H1 (cell line): ENCODE measurements at regions of chr12 and their contacts with region 1.

Region 1: DNA sequence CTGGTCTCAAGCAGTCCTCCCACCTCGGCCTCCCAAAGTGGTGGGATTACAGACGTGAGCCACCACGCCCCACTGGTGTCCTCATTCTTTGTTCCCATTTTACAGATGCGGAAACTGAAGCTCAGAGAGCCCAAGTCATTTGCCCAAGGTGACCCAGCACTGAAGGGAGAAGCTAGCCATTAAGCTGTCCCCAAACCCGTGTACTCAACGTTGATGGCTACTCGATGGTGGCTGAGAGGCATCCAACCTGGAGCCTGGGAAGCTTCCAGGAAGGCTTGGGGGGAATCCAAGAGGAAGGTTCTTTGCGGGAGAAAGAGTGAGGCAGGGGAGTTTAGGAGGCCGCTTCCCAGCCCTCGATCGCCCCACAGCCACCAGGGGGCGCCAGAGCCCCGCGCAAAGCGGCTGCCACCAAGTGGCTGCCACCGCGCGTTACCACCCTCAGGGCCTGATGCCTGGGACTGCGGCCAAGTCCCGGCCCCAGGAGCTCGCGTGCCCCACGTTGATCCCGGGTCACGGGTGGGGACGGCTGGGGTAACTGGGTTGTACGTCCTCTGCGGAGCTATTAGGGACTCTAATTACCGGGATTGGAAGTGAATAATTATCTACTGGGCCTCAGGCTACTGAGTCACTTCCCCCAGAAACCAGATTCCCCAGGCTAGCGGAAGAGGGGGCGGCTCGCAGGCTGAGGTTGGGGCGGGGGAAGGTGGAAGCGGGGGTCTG is 8.8 kb upstream of the SH2B3 start:
- DNase-seq: peak; percentile 60 to 98
- H3K4me3 ChIP-seq: no peak overlapping the region; a peak in 1 of 8 replicates
- H3K27ac ChIP-seq: no peak overlapping the region
- H3K4me1 ChIP-seq: no peaks in the 10 kb centered on the region
- H3K27me3 ChIP-seq: no peaks in the 10 kb centered on the region
- CTCF ChIP-seq: peak; percentile 92 to 100 (median 96)
- EP300 ChIP-seq: no peak
- POLR2A ChIP-seq: no peak
- RAD21 ChIP-seq: peak; percentile 95 to 97

Region 2: GRCh38 chr12:111339321-111339938 is 57.5 kb before region 1 on chr12:
- CTCF ChIA-PET with region 1: interaction called, 12 read pairs
- POLR2A ChIA-PET with region 1: no interaction called
- DNase-seq: no peak
- H3K4me3 ChIP-seq: no peak overlapping the region
- H3K27ac ChIP-seq: no peak overlapping the region
- H3K4me1 ChIP-seq: peaks cover 0 to 6% (median 0%) of the 10 kb centered on the region in 4 experiments; a peak in 2 of 7 replicates
- H3K27me3 ChIP-seq: no peaks in the 10 kb centered on the region
- CTCF ChIP-seq: no peak
- EP300 ChIP-seq: no peak
- POLR2A ChIP-seq: no peak
- RAD21 ChIP-seq: no peak

Region 3: DNA sequence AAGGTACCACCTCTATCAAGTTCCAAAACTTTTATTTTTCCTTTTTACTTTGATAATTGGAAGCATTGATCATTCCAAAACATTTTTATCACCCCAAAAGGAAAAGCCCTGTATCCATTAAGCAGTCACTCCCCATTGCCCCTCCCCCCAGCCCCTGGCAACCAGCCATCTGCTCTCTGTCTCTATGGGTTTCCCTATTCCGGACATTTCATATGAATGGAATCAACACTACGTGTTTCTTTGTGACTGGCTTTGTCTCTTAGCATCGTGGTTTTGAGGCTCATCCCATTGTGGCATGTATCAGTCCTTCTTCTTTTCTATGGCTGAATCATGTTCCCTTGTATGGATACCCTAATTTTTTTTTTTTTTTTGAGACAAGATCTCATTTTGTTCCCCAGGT is 10.0 kb before region 1 on chr12:
- CTCF ChIA-PET with region 1: interaction called, 50 read pairs
- POLR2A ChIA-PET with region 1: interaction called, 4 read pairs
- DNase-seq: no peak
- H3K4me3 ChIP-seq: no peak overlapping the region
- H3K27ac ChIP-seq: no peak overlapping the region
- H3K4me1 ChIP-seq: no peaks in the 10 kb centered on the region
- H3K27me3 ChIP-seq: no peaks in the 10 kb centered on the region; a peak in 1 of 7 replicates
- CTCF ChIP-seq: no peak
- EP300 ChIP-seq: no peak
- POLR2A ChIP-seq: no peak
- RAD21 ChIP-seq: no peak

Region 4: GRCh38 chr12:111419784-111420183 is 22.9 kb after region 1 on chr12:
- CTCF ChIA-PET with region 1: interaction called, 50 read pairs
- POLR2A ChIA-PET with region 1: interaction called, 3 read pairs
- DNase-seq: no peak
- H3K4me3 ChIP-seq: no peak overlapping the region
- H3K27ac ChIP-seq: no peak overlapping the region
- H3K4me1 ChIP-seq: peaks cover 2 to 17% (median 8%) of the 10 kb centered on the region in 4 experiments; a peak in 6 of 7 replicates
- H3K27me3 ChIP-seq: no peaks in the 10 kb centered on the region
- CTCF ChIP-seq: no peak
- EP300 ChIP-seq: no peak
- POLR2A ChIP-seq: no peak
- RAD21 ChIP-seq: no peak

Region 5: DNA sequence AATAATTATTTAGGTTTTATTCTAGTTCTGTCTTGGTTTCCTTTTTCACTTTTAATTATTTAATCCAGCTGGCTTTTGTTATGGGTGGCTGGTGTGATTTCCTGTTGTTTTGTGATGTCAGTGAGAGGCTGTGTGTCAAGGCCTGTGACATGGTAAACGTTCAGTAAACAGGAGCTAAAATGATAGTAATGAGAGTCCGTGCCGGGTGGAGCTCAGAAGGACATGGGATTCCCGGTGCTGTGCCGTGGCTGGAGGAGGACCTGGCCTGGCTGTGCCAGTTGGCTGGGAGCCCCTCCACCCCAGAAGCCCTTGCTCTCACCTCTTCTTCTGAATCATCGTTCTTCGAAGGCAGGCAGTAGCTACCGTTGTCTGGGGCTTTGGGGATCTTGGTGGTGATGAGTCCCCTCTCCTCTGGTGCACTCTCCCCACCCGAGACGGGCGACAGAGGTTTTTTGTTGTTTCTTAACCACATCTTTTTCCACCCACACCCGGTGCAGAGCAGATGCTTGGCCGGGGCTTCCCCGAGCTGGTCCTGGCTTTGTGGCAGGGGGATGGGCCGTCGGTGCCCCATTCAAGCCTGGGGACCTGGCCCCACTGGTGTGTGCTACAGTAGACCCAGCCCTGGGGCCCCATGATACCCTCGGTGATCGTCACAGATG is 37.9 kb after region 1 on chr12:
- CTCF ChIA-PET with region 1: interaction called, 838 read pairs
- POLR2A ChIA-PET with region 1: interaction called, 3 read pairs
- DNase-seq: no peak
- H3K4me3 ChIP-seq: no peak overlapping the region
- H3K27ac ChIP-seq: peak overlapping the region; percentile 32; the same call in 1 of the 2 replicates
- H3K4me1 ChIP-seq: peaks cover 4 to 49% (median 35%) of the 10 kb centered on the region in 4 experiments
- H3K27me3 ChIP-seq: no peaks in the 10 kb centered on the region
- CTCF ChIP-seq: no peak
- EP300 ChIP-seq: no peak
- POLR2A ChIP-seq: no peak
- RAD21 ChIP-seq: no peak

Region 6: GRCh38 chr12:111488271-111488670 is 91.4 kb after region 1 on chr12:
- CTCF ChIA-PET with region 1: interaction called, 24 read pairs
- POLR2A ChIA-PET with region 1: no interaction called
- DNase-seq: no peak
- H3K4me3 ChIP-seq: no peak overlapping the region
- H3K27ac ChIP-seq: no peak overlapping the region
- H3K4me1 ChIP-seq: no peaks in the 10 kb centered on the region
- H3K27me3 ChIP-seq: no peaks in the 10 kb centered on the region
- CTCF ChIP-seq: no peak
- EP300 ChIP-seq: no peak
- POLR2A ChIP-seq: no peak
- RAD21 ChIP-seq: no peak

Region 7: GRCh38 chr12:111624540-111624939 is 227.7 kb after region 1 on chr12:
- CTCF ChIA-PET with region 1: no interaction called
- POLR2A ChIA-PET with region 1: no interaction called
- DNase-seq: no peak
- H3K4me3 ChIP-seq: no peak overlapping the region
- H3K27ac ChIP-seq: no peak overlapping the region
- H3K4me1 ChIP-seq: no peaks in the 10 kb centered on the region
- H3K27me3 ChIP-seq: no peaks in the 10 kb centered on the region
- CTCF ChIP-seq: no peak
- EP300 ChIP-seq: no peak
- POLR2A ChIP-seq: no peak
- RAD21 ChIP-seq: no peak